ENCODE measurements at regions of chr20 and their contacts with region 1.

Region 1: DNA sequence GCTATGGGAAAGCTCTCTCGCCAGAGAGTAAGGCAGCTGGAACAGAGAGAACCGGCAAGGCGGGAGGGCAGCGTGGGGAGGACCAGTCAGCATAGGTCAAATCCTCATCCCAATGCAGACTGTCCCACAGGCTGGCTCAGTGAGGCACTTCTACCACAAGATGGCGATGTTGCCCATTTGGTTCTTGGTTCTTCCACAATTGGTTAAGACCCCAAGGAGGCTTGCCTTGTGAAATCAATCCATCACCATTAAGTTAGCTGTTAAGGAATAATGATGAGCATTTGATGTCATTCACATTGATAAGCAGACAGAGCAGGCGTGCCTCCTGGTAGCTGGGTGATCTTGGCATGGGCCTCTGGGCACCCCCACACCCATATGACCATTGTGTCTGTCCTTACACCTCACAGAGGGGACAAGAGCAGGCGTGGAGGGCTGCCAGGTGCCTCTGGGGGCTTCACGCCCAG is 2.4 kb downstream of the CSTL1 start:
- DNase-seq: peak; percentile 69
- H3K4me3 Mint-ChIP-seq: no peak overlapping the region
- H3K27ac Mint-ChIP-seq: no peak overlapping the region
- H3K4me1 Mint-ChIP-seq: no peaks in the 10 kb centered on the region
- H3K27me3 Mint-ChIP-seq: peaks cover 1% of the 10 kb centered on the region

Region 2: GRCh38 chr20:23399568-23400241 is 42.2 kb before region 1 on chr20:
- CTCF ChIA-PET with region 1: no interaction called
- POLR2A ChIA-PET with region 1: no interaction called
- intact Hi-C with region 1: no loop called
- DNase-seq: peak; percentile 27
- H3K4me3 Mint-ChIP-seq: no peak overlapping the region
- H3K27ac Mint-ChIP-seq: no peak overlapping the region
- H3K4me1 Mint-ChIP-seq: peaks cover 31% of the 10 kb centered on the region
- H3K27me3 Mint-ChIP-seq: no peaks in the 10 kb centered on the region

Region 3: GRCh38 chr20:23456409-23456808 is 14.5 kb after region 1 on chr20:
- CTCF ChIA-PET with region 1: interaction called, 16 read pairs
- POLR2A ChIA-PET with region 1: no interaction called
- intact Hi-C with region 1: no loop called
- DNase-seq: no peak
- H3K4me3 Mint-ChIP-seq: no peak overlapping the region
- H3K27ac Mint-ChIP-seq: no peak overlapping the region
- H3K4me1 Mint-ChIP-seq: peaks cover 9% of the 10 kb centered on the region
- H3K27me3 Mint-ChIP-seq: peaks cover 7% of the 10 kb centered on the region

Region 4: DNA sequence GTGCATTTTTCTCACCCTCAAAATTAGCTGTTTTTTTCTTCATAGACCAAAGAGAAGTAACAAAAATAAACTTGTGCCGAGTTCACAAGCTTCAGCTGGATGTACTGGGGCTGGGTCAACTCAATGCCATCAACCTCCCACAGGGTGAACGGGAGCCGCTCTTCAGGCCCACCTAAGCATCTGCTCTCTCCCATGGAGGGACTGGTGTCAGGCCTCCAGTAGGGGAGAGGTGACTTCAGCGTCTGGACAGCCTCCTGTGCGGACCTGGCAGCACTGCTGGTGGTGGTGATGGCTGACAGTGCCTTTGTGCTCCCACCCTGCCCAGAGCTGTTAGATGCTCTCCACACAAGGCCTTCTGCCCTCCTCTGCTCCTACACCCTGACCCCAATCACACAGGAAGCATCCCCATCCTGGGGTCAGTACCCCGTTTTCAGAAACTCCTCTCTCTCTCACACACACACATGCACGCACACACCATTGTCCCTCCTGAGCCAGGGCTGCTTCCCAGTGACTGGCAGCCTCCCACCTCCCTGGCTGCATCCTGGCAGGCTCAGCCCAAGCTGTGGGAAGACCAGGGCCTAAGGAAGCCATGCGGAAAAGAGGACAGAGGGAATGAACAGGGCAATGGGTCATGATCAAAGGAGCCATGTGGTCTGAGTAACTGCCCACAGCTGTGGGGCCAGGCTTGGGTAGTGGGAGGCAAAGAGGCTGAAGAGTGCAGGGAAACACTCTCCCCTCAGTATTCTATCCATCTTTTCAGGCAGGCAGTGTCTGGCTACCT is 66.8 kb after region 1 on chr20:
- CTCF ChIA-PET with region 1: no interaction called
- POLR2A ChIA-PET with region 1: no interaction called
- intact Hi-C with region 1: no loop called
- DNase-seq: no peak
- H3K4me3 Mint-ChIP-seq: no peak overlapping the region
- H3K27ac Mint-ChIP-seq: no peak overlapping the region
- H3K4me1 Mint-ChIP-seq: no peaks in the 10 kb centered on the region
- H3K27me3 Mint-ChIP-seq: peaks cover 4% of the 10 kb centered on the region

Region 5: GRCh38 chr20:23606652-23607049 is 164.8 kb after region 1 on chr20:
- CTCF ChIA-PET with region 1: interaction called, 50 read pairs
- POLR2A ChIA-PET with region 1: no interaction called
- intact Hi-C with region 1: loop called (anchors 1 kb)
- DNase-seq: peak; percentile 74
- H3K4me3 Mint-ChIP-seq: no peak overlapping the region
- H3K27ac Mint-ChIP-seq: no peak overlapping the region
- H3K4me1 Mint-ChIP-seq: no peaks in the 10 kb centered on the region
- H3K27me3 Mint-ChIP-seq: no peaks in the 10 kb centered on the region

Measured in activated CD4-positive, alpha-beta memory T cell treated with anti-CD3 and anti-CD28 coated beads for 36 hours (primary cell).